B cell (primary cell): ENCODE measurements at regions of chr9 and their contacts with region 1.

Region 1: GRCh38 chr9:100426530-100427428 is at the start of gene MSANTD3:
- DNase-seq: peak; percentile 75
- ATAC-seq: peak; percentile 90
- H3K4me3 ChIP-seq: peak within 1 kb of the TSS; percentile 40 to 77 (median 70)
- H3K4me3 Mint-ChIP-seq: peak within 1 kb of the TSS; percentile 95
- H3K27ac ChIP-seq: peak within 1 kb of the TSS in 1 of 2 donors; percentile 59
- H3K27ac Mint-ChIP-seq: peak within 1 kb of the TSS; percentile 93
- H3K4me1 ChIP-seq: peaks cover 13 to 16% of the 10 kb centered on the region in 2 donors
- H3K4me1 Mint-ChIP-seq: peaks cover 21% of the 10 kb centered on the region
- H3K27me3 ChIP-seq: peaks cover 0 to 2% (median 0%) of the 10 kb centered on the region in 4 experiments
- H3K27me3 Mint-ChIP-seq: peaks cover 2% of the 10 kb centered on the region
- CTCF ChIP-seq: no peak
- total RNA-seq, gene MSANTD3: 12.1 and 13.8 TPM in 2 replicates

Region 2: DNA sequence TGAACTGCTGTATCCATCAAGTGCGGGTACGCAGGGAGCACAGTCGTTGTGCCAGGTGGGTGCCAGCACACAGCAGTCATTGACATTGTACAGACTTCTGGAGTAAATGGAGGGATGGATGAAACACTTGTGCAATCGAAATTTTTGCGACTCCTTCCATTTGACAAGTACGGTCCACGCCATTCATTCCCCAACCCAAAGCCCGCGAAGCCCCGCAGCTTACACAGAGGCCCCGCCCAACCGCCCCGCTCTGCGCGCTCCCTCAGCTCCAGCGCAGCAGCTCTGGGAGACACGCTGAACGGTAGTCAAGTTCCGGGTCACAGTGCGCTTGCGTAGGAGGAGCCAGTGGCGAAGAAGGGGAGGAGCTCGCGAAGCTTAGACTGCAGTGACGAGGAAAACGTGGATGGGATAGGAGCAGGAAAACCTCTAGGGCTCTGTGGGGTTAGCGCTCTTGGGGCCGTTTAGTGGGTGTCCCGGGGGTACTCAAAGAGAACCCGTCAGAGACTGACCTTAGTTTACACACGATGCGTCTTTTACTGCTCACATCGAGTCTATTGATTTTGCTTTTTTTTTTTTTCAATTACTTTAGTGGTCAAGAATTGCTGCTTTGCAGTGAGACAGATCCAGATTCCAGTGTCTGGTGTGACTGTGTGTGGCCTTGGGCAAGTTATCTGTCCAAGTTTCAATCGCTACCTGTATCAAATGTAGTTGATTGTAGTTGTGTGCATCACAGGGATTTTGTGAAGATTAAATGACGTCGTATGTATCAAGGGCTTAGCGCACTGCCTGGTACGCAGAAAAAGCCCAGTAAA is 15.1 kb before region 1 on chr9:
- CTCF ChIA-PET with region 1: interaction called, 8 read pairs
- POLR2A ChIA-PET with region 1: no interaction called
- intact Hi-C with region 1: loop called (anchors 1 kb)
- DNase-seq: peak; percentile 88
- ATAC-seq: peak; percentile 99
- H3K4me3 ChIP-seq: peak overlapping the region; percentile 62 to 79 (median 75)
- H3K4me3 Mint-ChIP-seq: peak overlapping the region; percentile 85
- H3K27ac ChIP-seq: no peak overlapping the region
- H3K27ac Mint-ChIP-seq: peak overlapping the region; percentile 57
- H3K4me1 ChIP-seq: peaks cover 8 to 12% of the 10 kb centered on the region in 2 donors
- H3K4me1 Mint-ChIP-seq: peaks cover 14% of the 10 kb centered on the region
- H3K27me3 ChIP-seq: peaks cover 0 to 9% (median 3%) of the 10 kb centered on the region in 4 experiments
- H3K27me3 Mint-ChIP-seq: peaks cover 20% of the 10 kb centered on the region
- CTCF ChIP-seq: no peak

Region 3: DNA sequence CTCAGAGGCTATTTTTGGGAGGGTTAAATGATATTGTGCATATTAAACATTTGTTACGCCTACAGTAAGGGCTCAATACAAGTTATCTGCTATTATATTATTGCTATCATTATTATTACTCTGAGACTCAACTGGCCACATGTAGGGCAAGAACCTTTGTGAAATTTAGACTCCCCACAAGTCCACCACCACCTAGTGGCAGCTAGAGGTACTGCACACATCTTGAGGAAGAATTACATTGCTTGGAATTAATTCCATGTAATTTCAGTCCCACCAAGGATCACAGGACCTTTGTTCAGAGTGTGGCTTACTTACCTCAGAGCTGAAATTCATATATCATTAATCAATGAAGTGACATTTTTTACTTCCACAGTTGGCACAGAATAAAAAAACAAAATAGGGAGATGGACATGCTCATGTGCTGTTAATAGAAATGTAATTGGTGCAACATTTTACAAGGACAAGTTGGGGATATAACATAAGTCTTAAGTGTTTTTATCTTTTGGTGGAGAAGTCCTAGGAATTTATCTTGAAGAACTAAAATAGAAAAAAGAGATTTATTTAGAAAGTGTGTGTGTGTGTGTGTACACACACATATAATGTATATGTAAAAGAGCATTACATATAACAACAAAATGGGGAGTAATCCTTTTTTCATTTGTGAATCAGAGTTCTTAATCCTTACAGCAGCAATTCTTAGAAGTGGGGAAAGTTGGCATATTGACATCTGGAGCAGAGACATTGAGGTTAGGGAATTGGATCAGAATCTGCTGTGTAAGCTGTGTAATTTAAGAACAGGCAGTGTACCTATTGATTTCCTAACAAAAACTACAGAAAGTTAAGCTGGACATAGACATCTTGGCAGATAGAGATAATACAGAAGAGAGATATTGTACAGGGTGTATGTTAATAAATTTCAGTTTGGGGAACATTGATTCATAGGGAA is 11.4 kb after region 1 on chr9:
- CTCF ChIA-PET with region 1: interaction called, 12 read pairs
- POLR2A ChIA-PET with region 1: no interaction called
- intact Hi-C with region 1: loop called (anchors 1 kb)
- DNase-seq: peak; percentile 72
- ATAC-seq: peak; percentile 81
- H3K4me3 ChIP-seq: no peak overlapping the region
- H3K4me3 Mint-ChIP-seq: no peak overlapping the region
- H3K27ac ChIP-seq: no peak overlapping the region
- H3K27ac Mint-ChIP-seq: no peak overlapping the region
- H3K4me1 ChIP-seq: no peaks in the 10 kb centered on the region
- H3K4me1 Mint-ChIP-seq: no peaks in the 10 kb centered on the region
- H3K27me3 ChIP-seq: no peaks in the 10 kb centered on the region
- H3K27me3 Mint-ChIP-seq: no peaks in the 10 kb centered on the region
- CTCF ChIP-seq: peak; percentile 99